Caco-2 (cell line): ENCODE measurements at regions of chr15 and their contacts with region 1.

Region 1: GRCh38 chr15:73394782-73395181 is 26.0 kb upstream of the HCN4 start:
- DNase-seq: no peak
- H3K4me3 ChIP-seq: no peak overlapping the region
- H3K4me3 Mint-ChIP-seq: no peak overlapping the region
- H3K27ac Mint-ChIP-seq: no peak overlapping the region
- H3K4me1 ChIP-seq: peaks cover 19% of the 10 kb centered on the region
- H3K4me1 Mint-ChIP-seq: peaks cover 9% of the 10 kb centered on the region
- H3K27me3 ChIP-seq: no peaks in the 10 kb centered on the region
- H3K27me3 Mint-ChIP-seq: peaks cover 4% of the 10 kb centered on the region
- CTCF ChIP-seq: no peak

Region 2: GRCh38 chr15:73325193-73325861 is 69.5 kb before region 1 on chr15:
- CTCF ChIA-PET with region 1: no interaction called
- POLR2A ChIA-PET with region 1: no interaction called
- intact Hi-C with region 1: loop called (anchors 10 kb)
- DNase-seq: peak in 1 of 2 experiments; percentile 12
- H3K4me3 ChIP-seq: no peak overlapping the region
- H3K4me3 Mint-ChIP-seq: no peak overlapping the region
- H3K27ac Mint-ChIP-seq: no peak overlapping the region
- H3K4me1 ChIP-seq: no peaks in the 10 kb centered on the region
- H3K4me1 Mint-ChIP-seq: no peaks in the 10 kb centered on the region
- H3K27me3 ChIP-seq: no peaks in the 10 kb centered on the region
- H3K27me3 Mint-ChIP-seq: peaks cover 6% of the 10 kb centered on the region
- CTCF ChIP-seq: no peak